ENCODE measurements at regions of chr14 and their contacts with region 1.

Region 1: DNA sequence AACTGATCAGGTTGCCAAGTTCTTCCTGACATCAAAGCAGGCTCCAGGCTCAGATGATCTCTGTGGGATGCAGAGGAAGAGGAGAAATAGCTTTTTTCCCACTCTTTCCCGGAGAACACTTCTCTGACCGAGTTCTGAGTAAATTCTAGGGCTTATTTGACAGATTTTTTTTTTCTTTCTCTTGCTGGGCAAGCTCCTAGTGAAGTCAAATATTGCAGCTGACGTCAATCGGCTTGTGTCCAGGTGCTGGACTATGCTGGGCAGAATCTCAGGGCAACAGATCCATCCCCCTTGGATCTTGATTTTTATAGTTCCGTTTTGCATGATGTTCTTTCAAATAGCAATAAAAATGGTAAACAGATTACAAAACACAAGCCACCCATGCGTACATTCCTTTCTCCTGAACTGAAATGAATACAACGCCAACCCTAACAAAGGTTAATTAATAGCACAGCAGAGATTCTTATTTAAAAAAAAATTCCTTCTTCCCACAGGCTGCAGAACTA is 182.2 kb downstream of the NOVA1 start:
- DNase-seq: peak; percentile 53
- ATAC-seq: peak; percentile 84
- H3K4me3 ChIP-seq: no peak overlapping the region
- H3K27ac ChIP-seq: peak overlapping the region; percentile 80
- H3K4me1 ChIP-seq: peaks cover 7% of the 10 kb centered on the region
- H3K27me3 ChIP-seq: no peaks in the 10 kb centered on the region
- CTCF ChIP-seq: no peak

Region 2: GRCh38 chr14:26429205-26429604 is 13.5 kb after region 1 on chr14:
- CTCF ChIA-PET with region 1: no interaction called
- POLR2A ChIA-PET with region 1: no interaction called
- intact Hi-C with region 1: no loop called
- DNase-seq: no peak
- ATAC-seq: no peak
- H3K4me3 ChIP-seq: no peak overlapping the region
- H3K27ac ChIP-seq: no peak overlapping the region
- H3K4me1 ChIP-seq: peaks cover 5% of the 10 kb centered on the region; the same call in 1 of the 2 replicates
- H3K27me3 ChIP-seq: no peaks in the 10 kb centered on the region
- CTCF ChIP-seq: no peak

Region 3: GRCh38 chr14:26531894-26532293 is 116.2 kb after region 1 on chr14:
- CTCF ChIA-PET with region 1: no interaction called
- POLR2A ChIA-PET with region 1: no interaction called
- intact Hi-C with region 1: loop called (anchors 5 kb)
- DNase-seq: peak; percentile 76
- ATAC-seq: peak; percentile 95
- H3K4me3 ChIP-seq: no peak overlapping the region
- H3K27ac ChIP-seq: no peak overlapping the region
- H3K4me1 ChIP-seq: peaks cover 12% of the 10 kb centered on the region
- H3K27me3 ChIP-seq: no peaks in the 10 kb centered on the region
- CTCF ChIP-seq: peak; percentile 61

Measured in PC-3 (cell line).